ENCODE measurements at regions of chr2 and their contacts with region 1.

Region 1: GRCh38 chr2:42494355-42495233 is 812 bp upstream of the KCNG3 start:
- DNase-seq: peak; percentile 88
- H3K4me3 ChIP-seq: peak overlapping the region; percentile 72
- H3K27ac ChIP-seq: peak overlapping the region; percentile 26
- H3K4me1 ChIP-seq: peaks cover 10% of the 10 kb centered on the region
- CTCF ChIP-seq: peak; percentile 98

Region 2: GRCh38 chr2:42474765-42475454 is 19.7 kb before region 1 on chr2:
- CTCF ChIA-PET with region 1: no interaction called
- POLR2A ChIA-PET with region 1: no interaction called
- intact Hi-C with region 1: no loop called
- DNase-seq: peak; percentile 14
- H3K4me3 ChIP-seq: no peak overlapping the region
- H3K27ac ChIP-seq: no peak overlapping the region
- H3K4me1 ChIP-seq: no peaks in the 10 kb centered on the region
- CTCF ChIP-seq: no peak

Region 3: DNA sequence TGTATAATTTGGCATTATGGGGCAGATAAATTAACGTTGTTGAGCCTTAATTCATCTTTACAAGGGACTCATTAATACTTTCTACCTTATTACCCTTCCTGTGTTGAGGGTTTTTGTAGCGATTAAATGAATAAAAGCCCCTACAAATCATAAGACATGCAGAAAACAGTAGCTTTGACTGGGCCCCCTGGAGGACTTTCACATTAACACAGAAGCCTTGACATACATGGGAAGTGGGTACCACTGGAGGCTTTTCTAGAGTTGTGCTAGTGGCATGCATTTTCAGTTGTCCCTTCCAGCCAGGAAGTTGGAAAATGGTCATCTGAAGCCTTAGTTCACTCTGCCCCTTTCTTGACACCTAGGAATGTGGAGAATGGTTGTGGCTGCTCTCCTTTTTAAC is 104.1 kb after region 1 on chr2:
- CTCF ChIA-PET with region 1: no interaction called
- POLR2A ChIA-PET with region 1: no interaction called
- intact Hi-C with region 1: loop called (anchors 1 kb)
- DNase-seq: peak; percentile 68
- H3K4me3 ChIP-seq: peak overlapping the region; percentile 48
- H3K27ac ChIP-seq: peak overlapping the region; percentile 82
- H3K4me1 ChIP-seq: peaks cover 43% of the 10 kb centered on the region
- CTCF ChIP-seq: peak; percentile 73

Region 4: GRCh38 chr2:42663106-42663780 is 168.6 kb after region 1 on chr2:
- CTCF ChIA-PET with region 1: no interaction called
- POLR2A ChIA-PET with region 1: interaction called, 5 read pairs
- intact Hi-C with region 1: loop called (anchors 1 kb)
- DNase-seq: peak; percentile 83
- H3K4me3 ChIP-seq: no peak overlapping the region
- H3K27ac ChIP-seq: no peak overlapping the region
- H3K4me1 ChIP-seq: peaks cover 9% of the 10 kb centered on the region
- CTCF ChIP-seq: peak; percentile 99

Region 5: DNA sequence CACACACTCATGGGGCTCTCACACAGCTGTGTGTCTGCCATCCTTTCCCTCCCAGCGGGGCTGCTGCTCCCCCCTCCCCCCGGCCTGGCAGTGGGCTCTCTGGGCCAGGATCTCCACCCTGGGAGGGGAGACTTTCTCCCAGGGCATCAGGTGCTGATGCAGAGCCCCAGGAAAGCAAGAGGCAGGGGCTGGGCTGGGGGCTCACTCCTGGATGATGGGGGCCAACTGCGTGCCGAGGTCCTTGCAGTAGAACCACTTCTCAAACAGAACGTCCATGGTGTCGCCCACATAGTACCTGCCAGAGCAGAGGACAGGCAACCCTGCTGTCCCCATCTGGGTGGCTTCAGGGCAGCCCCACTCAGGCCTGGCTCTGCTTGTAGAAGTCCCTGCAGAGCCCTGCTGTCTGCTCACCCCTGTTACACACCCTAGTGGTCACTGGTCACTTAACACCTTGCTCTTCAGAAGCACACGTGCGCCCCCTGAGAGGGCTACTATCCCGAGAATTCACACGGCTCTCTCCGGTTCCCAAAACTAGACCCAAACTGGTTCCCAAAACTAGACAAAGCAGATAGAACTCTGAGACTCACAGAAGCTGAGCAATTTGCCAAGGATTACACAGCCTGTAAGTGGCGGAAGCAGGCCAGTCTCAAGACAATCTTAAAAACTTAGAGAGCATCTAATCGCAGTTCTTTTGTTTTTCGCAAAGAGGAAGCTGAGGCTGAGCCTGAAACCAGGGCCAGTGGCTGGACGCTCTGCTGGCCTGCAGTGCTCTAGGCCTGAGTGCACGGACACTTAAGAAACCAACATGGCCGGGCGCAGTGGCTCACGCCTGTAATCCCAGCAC is 275.9 kb after region 1 on chr2:
- CTCF ChIA-PET with region 1: no interaction called
- POLR2A ChIA-PET with region 1: no interaction called
- intact Hi-C with region 1: loop called (anchors 5 kb)
- DNase-seq: peak; percentile 52
- H3K4me3 ChIP-seq: no peak overlapping the region
- H3K27ac ChIP-seq: no peak overlapping the region
- H3K4me1 ChIP-seq: no peaks in the 10 kb centered on the region
- CTCF ChIP-seq: peak; percentile 71

Measured in OCI-LY7 (cell line).